ENCODE measurements at regions of chr1 and their contacts with region 1.

Region 1: GRCh38 chr1:155227261-155228095 is 19.0 kb downstream of the MTX1 start:
- DNase-seq: peak; percentile 89 to 99 (median 98)
- ATAC-seq: peak; percentile 97
- H3K4me3 ChIP-seq: peak overlapping the region; percentile 75
- H3K4me3 Mint-ChIP-seq: peak overlapping the region; percentile 79 to 95 (median 88)
- H3K27ac ChIP-seq: peak overlapping the region; percentile 75
- H3K27ac Mint-ChIP-seq: peak overlapping the region; percentile 77 to 97 (median 88)
- H3K4me1 ChIP-seq: peaks cover 11 to 15% of the 10 kb centered on the region in 2 donors
- H3K4me1 Mint-ChIP-seq: peaks cover 11 to 26% (median 19%) of the 10 kb centered on the region in 7 donors
- H3K27me3 ChIP-seq: no peaks in the 10 kb centered on the region
- H3K27me3 Mint-ChIP-seq: peaks cover 0 to 2% (median 0%) of the 10 kb centered on the region in 5 donors

Region 2: DNA sequence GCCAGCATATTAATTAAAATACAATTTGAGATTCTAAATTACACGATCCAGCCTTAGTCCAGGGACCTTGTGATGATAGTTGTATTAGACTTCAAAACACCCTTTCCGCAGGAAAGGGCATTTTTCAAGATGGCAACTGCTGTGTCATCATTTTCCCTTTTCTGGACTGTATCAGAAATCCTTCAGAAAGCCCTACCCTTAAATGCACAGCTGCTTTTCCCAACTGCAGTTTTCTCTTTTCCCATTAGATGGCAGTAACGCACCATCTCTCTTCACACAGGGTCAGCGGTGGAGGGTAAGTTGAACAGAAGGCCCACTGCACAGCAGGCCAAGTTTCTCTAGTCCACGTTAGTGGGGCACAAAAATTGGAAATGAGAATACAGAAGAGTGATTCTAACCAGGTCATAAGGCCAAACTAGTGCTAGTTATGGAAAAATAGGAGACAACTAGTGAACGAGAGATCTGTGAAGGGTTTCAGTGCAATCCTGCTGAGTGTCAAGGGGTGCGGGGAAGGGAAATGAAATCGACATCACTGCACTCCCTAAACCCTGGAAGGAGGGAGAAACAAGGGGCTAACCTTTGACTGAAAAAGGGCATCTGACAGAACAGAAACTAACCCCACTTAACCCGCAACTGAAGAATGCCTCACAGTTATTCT is 747.6 kb before region 1 on chr1:
- CTCF ChIA-PET with region 1: no interaction called
- POLR2A ChIA-PET with region 1: no interaction called
- intact Hi-C with region 1: no loop called
- DNase-seq: peak in 8 of 9 donors; percentile 39 to 78 (median 66)
- ATAC-seq: peak; percentile 90
- H3K4me3 ChIP-seq: no peak overlapping the region
- H3K4me3 Mint-ChIP-seq: no peak overlapping the region
- H3K27ac ChIP-seq: no peak overlapping the region
- H3K27ac Mint-ChIP-seq: peak overlapping the region in 1 of 9 donors; percentile 0
- H3K4me1 ChIP-seq: peaks cover 0 to 10% of the 10 kb centered on the region in 2 donors
- H3K4me1 Mint-ChIP-seq: peaks cover 12 to 27% (median 19%) of the 10 kb centered on the region in 7 donors
- H3K27me3 ChIP-seq: no peaks in the 10 kb centered on the region
- H3K27me3 Mint-ChIP-seq: peaks cover 0 to 14% (median 0%) of the 10 kb centered on the region in 5 donors

Region 3: GRCh38 chr1:154925335-154926170 is 301.9 kb before region 1 on chr1:
- CTCF ChIA-PET with region 1: no interaction called
- POLR2A ChIA-PET with region 1: no interaction called
- intact Hi-C with region 1: no loop called
- DNase-seq: no peak
- ATAC-seq: peak; percentile 32
- H3K4me3 ChIP-seq: no peak overlapping the region
- H3K4me3 Mint-ChIP-seq: peak overlapping the region in 1 of 10 donors; percentile 39
- H3K27ac ChIP-seq: no peak overlapping the region
- H3K27ac Mint-ChIP-seq: peak overlapping the region in 2 of 9 donors; percentile 26 to 78
- H3K4me1 ChIP-seq: no peaks in the 10 kb centered on the region
- H3K4me1 Mint-ChIP-seq: peaks cover 0 to 15% (median 5%) of the 10 kb centered on the region in 7 donors
- H3K27me3 ChIP-seq: no peaks in the 10 kb centered on the region
- H3K27me3 Mint-ChIP-seq: no peaks in the 10 kb centered on the region

Region 4: GRCh38 chr1:154974063-154974807 is 253.2 kb before region 1 on chr1 and contains the start of gene CKS1B:
- CTCF ChIA-PET with region 1: no interaction called
- POLR2A ChIA-PET with region 1: no interaction called
- intact Hi-C with region 1: loop called in 1 of 2 experiments (anchors 1 kb)
- DNase-seq: peak; percentile 86 to 100 (median 98)
- ATAC-seq: peak; percentile 89
- H3K4me3 ChIP-seq: peak within 1 kb of the TSS; percentile 82
- H3K4me3 Mint-ChIP-seq: no peak within 1 kb of the TSS
- H3K27ac ChIP-seq: peak within 1 kb of the TSS; percentile 94
- H3K27ac Mint-ChIP-seq: no peak within 1 kb of the TSS
- H3K4me1 ChIP-seq: peaks cover 28 to 35% of the 10 kb centered on the region in 2 donors
- H3K4me1 Mint-ChIP-seq: peaks cover 27 to 39% (median 31%) of the 10 kb centered on the region in 7 donors
- H3K27me3 ChIP-seq: no peaks in the 10 kb centered on the region
- H3K27me3 Mint-ChIP-seq: no peaks in the 10 kb centered on the region
- total RNA-seq, gene CKS1B: 8.4 to 105 (median 10.2) TPM

Region 5: GRCh38 chr1:155091071-155091709 is 136.3 kb before region 1 on chr1:
- CTCF ChIA-PET with region 1: interaction called, 5 read pairs
- POLR2A ChIA-PET with region 1: no interaction called
- intact Hi-C with region 1: loop called (anchors 1 kb)
- DNase-seq: peak; percentile 57 to 86 (median 73)
- ATAC-seq: peak; percentile 89
- H3K4me3 ChIP-seq: no peak overlapping the region
- H3K4me3 Mint-ChIP-seq: no peak overlapping the region
- H3K27ac ChIP-seq: no peak overlapping the region
- H3K27ac Mint-ChIP-seq: peak overlapping the region in 1 of 9 donors; percentile 33
- H3K4me1 ChIP-seq: peaks cover 2% of the 10 kb centered on the region in 2 donors
- H3K4me1 Mint-ChIP-seq: peaks cover 0 to 12% (median 4%) of the 10 kb centered on the region in 7 donors
- H3K27me3 ChIP-seq: no peaks in the 10 kb centered on the region
- H3K27me3 Mint-ChIP-seq: peaks cover 0 to 21% (median 0%) of the 10 kb centered on the region in 5 donors

Region 6: DNA sequence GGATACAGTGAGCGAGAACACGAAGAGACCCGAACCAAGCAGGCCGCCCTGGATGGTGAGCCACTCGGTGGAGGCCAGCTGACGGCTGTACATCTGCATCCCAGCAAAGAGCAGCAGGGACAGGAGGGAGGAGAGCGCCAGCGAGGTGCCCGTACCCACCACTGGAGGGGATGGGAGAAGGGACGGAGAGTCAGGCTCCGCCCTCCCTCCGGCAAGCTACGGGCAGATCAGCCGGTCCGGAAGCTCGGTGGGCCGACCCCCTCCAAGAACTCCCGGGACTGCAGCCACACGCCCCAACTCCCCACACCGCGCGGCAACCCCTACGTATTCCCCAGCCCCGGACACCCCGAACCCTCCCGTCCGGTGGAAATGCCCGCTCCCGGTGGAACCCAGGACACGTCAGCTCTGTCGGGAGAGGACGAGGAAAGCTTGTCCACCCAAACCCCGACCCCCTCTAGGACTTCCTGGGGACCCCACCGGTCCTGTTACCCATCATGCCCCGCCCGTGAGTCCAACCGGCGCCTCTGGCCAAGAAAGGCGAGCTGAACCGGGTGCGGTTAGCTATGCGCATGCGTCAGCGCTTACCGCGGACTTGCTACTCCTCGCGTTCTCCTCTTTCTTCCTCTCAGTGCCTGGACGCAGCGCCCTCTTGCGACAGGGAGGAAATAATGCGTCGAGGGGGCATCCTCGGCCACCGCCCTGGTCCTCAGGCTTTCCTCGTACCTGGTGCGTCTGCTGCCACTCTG is 54.6 kb before region 1 on chr1 and contains the start of gene KRTCAP2:
- CTCF ChIA-PET with region 1: interaction called, 11 read pairs
- POLR2A ChIA-PET with region 1: interaction called, 30 read pairs
- intact Hi-C with region 1: loop called (anchors 1 kb)
- DNase-seq: peak; percentile 89 to 93 (median 92)
- ATAC-seq: peak; percentile 91
- H3K4me3 ChIP-seq: peak within 1 kb of the TSS; percentile 90
- H3K4me3 Mint-ChIP-seq: peak within 1 kb of the TSS; percentile 94 to 100 (median 98)
- H3K27ac ChIP-seq: peak within 1 kb of the TSS; percentile 88
- H3K27ac Mint-ChIP-seq: peak within 1 kb of the TSS; percentile 95 to 99 (median 98)
- H3K4me1 ChIP-seq: peaks cover 11 to 18% of the 10 kb centered on the region in 2 donors
- H3K4me1 Mint-ChIP-seq: peaks cover 32 to 60% (median 47%) of the 10 kb centered on the region in 7 donors
- H3K27me3 ChIP-seq: no peaks in the 10 kb centered on the region
- H3K27me3 Mint-ChIP-seq: peaks cover 0 to 6% (median 0%) of the 10 kb centered on the region in 5 donors
- total RNA-seq, gene KRTCAP2: 97.4 to 236 (median 155) TPM

Region 7: DNA sequence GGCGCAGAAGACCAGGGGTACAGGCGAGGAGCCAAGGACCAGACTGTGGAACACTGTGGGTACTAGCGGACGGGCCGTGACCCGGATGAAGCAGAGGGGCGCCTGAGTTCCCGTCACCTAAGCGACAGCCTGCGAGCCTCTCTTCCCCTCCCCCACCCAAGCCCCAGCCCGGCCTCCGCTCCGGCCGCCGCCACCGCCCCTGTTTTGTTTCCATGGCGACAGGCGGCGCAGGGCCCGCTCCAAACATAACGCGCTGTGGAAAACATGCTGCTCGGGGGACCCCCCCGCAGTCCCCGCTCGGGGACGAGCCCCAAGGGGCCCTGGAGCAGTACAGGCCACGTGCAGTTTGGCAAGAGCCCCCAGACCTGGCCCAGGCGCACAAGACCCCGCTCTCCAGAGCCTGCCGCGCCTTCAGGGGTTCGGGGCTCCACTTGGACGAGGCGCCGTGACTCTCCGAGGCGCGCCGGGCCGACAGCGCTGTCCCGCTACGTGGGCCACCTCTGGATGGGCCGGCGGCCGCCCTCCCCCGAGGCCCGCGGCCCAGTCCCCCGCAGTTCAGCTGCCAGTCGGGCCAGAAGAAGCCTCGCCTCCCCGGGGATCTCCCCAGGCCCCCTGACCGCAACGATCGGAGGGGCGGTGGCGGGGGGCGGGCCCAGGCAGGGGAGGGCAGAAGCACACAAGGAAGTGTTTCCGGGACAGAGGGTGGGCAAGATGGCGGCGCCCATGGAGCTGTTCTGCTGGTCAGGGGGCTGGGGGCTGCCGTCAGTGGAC is 18.8 kb before region 1 on chr1 and contains the start of gene MTX1:
- CTCF ChIA-PET with region 1: interaction called, 86 read pairs
- POLR2A ChIA-PET with region 1: interaction called, 63 read pairs
- intact Hi-C with region 1: loop called (anchors 1 kb)
- DNase-seq: peak; percentile 83 to 91 (median 88)
- ATAC-seq: peak; percentile 89
- H3K4me3 ChIP-seq: peak within 1 kb of the TSS; percentile 100
- H3K4me3 Mint-ChIP-seq: peak within 1 kb of the TSS; percentile 81 to 92 (median 88)
- H3K27ac ChIP-seq: peak within 1 kb of the TSS; percentile 100
- H3K27ac Mint-ChIP-seq: peak within 1 kb of the TSS; percentile 92 to 99 (median 96)
- H3K4me1 ChIP-seq: peaks cover 20 to 21% of the 10 kb centered on the region in 2 donors
- H3K4me1 Mint-ChIP-seq: peaks cover 19 to 30% (median 24%) of the 10 kb centered on the region in 7 donors
- H3K27me3 ChIP-seq: no peaks in the 10 kb centered on the region
- H3K27me3 Mint-ChIP-seq: no peaks in the 10 kb centered on the region
- total RNA-seq, gene MTX1: 19.5 to 40.8 (median 22.0) TPM

Region 8: DNA sequence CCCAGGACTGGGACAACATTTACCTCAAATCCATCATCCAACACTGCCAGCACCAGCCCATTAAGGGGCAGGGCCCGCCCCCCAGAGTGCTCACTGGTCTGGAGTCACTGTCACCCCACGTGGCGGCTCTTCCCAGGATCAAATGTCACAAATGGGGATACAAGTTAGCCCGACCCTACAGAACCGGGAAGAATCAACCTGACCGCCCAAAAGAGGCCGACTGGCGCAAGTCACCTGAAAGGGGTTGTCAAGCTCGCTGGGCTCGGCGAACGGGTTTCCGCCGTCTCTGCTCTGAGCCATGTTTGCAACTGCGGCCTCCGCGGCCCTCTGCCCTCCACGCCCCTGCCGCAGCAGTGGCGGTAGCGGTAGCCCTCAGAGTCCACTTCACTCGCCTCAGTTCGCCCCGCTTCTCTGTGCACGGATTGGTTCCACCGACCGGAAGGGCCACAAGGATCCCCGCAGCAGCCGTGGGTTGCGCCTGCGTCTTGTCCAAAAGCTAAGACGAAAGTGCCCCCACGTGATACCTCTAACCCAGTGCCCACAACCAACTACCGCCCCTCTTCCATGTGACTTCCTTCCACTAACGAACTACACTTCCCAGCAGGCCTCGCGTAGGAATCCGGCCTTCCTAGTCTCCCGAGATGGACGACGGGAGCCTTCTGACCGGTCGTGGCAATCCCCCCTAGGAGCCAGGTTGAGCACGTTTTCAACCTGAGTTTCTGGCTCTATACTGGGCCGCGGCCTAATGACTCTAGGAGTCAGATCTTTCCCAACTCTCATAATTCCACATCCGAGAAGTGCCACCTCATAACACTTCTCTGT is 34.6 kb after region 1 on chr1 and contains the start of gene SCAMP3:
- CTCF ChIA-PET with region 1: no interaction called
- POLR2A ChIA-PET with region 1: no interaction called
- intact Hi-C with region 1: loop called (anchors 1 kb)
- DNase-seq: peak; percentile 52 to 89 (median 79)
- ATAC-seq: peak; percentile 99
- H3K4me3 ChIP-seq: peak within 1 kb of the TSS; percentile 88
- H3K4me3 Mint-ChIP-seq: peak within 1 kb of the TSS; percentile 81 to 100 (median 98)
- H3K27ac ChIP-seq: peak within 1 kb of the TSS; percentile 87
- H3K27ac Mint-ChIP-seq: peak within 1 kb of the TSS; percentile 89 to 98 (median 96)
- H3K4me1 ChIP-seq: peaks cover 18 to 19% of the 10 kb centered on the region in 2 donors
- H3K4me1 Mint-ChIP-seq: peaks cover 22 to 42% (median 33%) of the 10 kb centered on the region in 7 donors
- H3K27me3 ChIP-seq: no peaks in the 10 kb centered on the region
- H3K27me3 Mint-ChIP-seq: no peaks in the 10 kb centered on the region
- total RNA-seq, gene SCAMP3: 50.8 to 118 (median 100) TPM

Region 9: GRCh38 chr1:155308493-155309422 is 81.3 kb after region 1 on chr1 and contains the start of gene FDPS:
- CTCF ChIA-PET with region 1: no interaction called
- POLR2A ChIA-PET with region 1: no interaction called
- intact Hi-C with region 1: loop called in 1 of 2 experiments (anchors 1 kb)
- DNase-seq: peak; percentile 83 to 98 (median 95)
- ATAC-seq: peak; percentile 98
- H3K4me3 ChIP-seq: peak within 1 kb of the TSS; percentile 90
- H3K4me3 Mint-ChIP-seq: peak within 1 kb of the TSS; percentile 88 to 99 (median 97)
- H3K27ac ChIP-seq: peak within 1 kb of the TSS; percentile 87
- H3K27ac Mint-ChIP-seq: peak within 1 kb of the TSS; percentile 89 to 98 (median 96)
- H3K4me1 ChIP-seq: peaks cover 11 to 20% of the 10 kb centered on the region in 2 donors
- H3K4me1 Mint-ChIP-seq: peaks cover 12 to 43% (median 27%) of the 10 kb centered on the region in 7 donors
- H3K27me3 ChIP-seq: no peaks in the 10 kb centered on the region
- H3K27me3 Mint-ChIP-seq: no peaks in the 10 kb centered on the region
- total RNA-seq, gene FDPS: 58.5 to 193 (median 79.0) TPM

Region 10: DNA sequence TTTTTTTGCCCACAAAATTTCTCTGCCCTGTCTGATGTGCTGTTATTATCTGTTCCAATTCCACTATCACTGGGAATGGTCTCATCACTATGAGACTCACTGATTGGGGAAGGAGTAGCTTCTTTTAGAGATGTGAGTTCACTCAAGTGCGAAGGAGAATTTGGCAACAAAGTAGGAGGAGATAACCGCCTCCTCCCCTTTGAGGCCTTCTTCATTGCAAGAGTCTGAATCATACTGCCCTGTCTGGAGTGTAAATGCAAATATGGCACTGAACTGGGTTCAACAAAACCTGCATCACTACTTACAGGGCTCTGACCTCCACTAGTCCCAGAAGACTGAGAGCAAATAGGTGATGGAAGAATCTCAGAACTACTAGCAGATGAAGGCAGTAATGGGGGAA is 251.7 kb after region 1 on chr1:
- CTCF ChIA-PET with region 1: no interaction called
- POLR2A ChIA-PET with region 1: no interaction called
- intact Hi-C with region 1: no loop called
- DNase-seq: no peak
- ATAC-seq: no peak
- H3K4me3 ChIP-seq: no peak overlapping the region
- H3K4me3 Mint-ChIP-seq: no peak overlapping the region
- H3K27ac ChIP-seq: no peak overlapping the region
- H3K27ac Mint-ChIP-seq: peak overlapping the region in 4 of 9 donors; percentile 37 to 60 (median 50)
- H3K4me1 ChIP-seq: no peaks in the 10 kb centered on the region
- H3K4me1 Mint-ChIP-seq: peaks cover 15 to 50% (median 38%) of the 10 kb centered on the region in 7 donors
- H3K27me3 ChIP-seq: no peaks in the 10 kb centered on the region
- H3K27me3 Mint-ChIP-seq: no peaks in the 10 kb centered on the region